Astrocyte of the cerebellum (primary cell): ENCODE measurements at regions of chr15 and their contacts with region 1.

Region 1: DNA sequence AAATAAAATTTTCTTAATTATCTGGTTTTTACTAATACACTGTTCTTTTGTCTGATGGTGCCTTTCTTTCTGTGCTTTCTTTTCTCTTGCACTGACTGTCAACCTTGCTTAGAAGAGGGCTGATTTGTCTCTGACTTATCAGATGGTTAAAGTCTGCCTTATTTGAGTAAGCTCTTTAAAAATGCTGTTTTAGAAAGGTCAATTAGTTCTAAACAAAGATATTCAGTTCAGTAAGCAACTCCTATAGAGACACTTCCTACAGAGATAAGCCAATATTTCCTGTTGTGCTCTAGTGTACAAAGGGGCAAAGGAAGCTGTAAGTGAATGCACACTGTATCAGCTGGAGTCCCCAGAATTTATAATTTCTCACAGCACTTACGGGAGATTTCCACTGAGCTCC is 153.4 kb upstream of the TSPAN3 start:
- DNase-seq: no peak
- H3K4me3 ChIP-seq: no peak overlapping the region
- CTCF ChIP-seq: no peak

Region 2: DNA sequence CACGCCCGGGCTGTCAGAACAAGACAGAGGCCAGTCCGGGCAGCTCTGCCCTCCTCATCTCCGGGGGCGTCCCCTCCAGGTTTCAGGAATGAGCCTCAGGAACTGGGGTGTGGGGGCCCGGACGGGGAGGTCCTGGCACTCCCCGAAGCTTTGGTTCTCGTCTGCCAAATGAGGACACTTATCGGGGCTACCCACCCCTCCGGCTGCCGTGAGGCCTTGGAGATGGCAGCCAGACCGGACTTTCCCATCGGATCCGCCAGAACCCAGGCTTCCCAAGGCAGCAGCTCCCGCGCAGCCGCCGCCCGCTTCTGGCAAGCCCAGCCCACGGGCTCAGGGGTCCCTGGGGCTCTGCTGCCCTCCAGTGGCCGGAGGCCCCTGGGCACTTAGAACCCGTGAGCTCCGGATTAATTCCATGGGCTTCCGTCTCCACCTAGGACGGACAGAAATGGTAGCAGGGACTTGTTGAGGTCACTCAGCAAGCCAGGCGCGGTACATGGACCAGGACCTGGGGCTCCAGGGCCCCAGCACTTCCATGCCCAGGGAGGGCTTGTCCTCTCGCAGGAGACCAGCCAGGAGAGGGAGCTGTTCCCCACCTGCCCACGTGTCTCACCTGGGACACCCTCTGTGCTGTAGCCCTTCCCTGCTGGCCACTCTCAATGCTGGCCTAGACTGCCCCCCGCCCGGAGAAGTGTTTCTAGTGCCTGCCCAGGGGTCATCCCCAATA is 319.0 kb after region 1 on chr15:
- in situ Hi-C with region 1: loop called (anchors 25 kb)
- DNase-seq: peak; percentile 71
- H3K4me3 ChIP-seq: peak overlapping the region; percentile 34
- CTCF ChIP-seq: peak; percentile 97